SK-N-SH (cell line): ENCODE measurements at regions of chr7 and their contacts with region 1.

Region 1: GRCh38 chr7:35906191-35906908 is 105.5 kb downstream of the SEPTIN7 start:
- DNase-seq: peak; percentile 57
- H3K4me3 ChIP-seq: no peak overlapping the region; a peak in 1 of 4 replicates
- H3K27ac ChIP-seq: peak overlapping the region; percentile 13 to 39; a peak in 3 of 4 replicates
- H3K4me1 ChIP-seq: peaks cover 6 to 24% of the 10 kb centered on the region in 2 experiments; a peak in 2 of 4 replicates
- H3K27me3 ChIP-seq: no peaks in the 10 kb centered on the region
- CTCF ChIP-seq: peak; percentile 99
- EP300 ChIP-seq: no peak; a peak in 1 of 4 replicates
- RAD21 ChIP-seq: peak; percentile 96

Region 2: GRCh38 chr7:35694781-35695472 is 211.4 kb before region 1 on chr7 and contains the start of gene HERPUD2:
- CTCF ChIA-PET with region 1: interaction called, 45 read pairs
- POLR2A ChIA-PET with region 1: no interaction called
- DNase-seq: peak; percentile 99
- H3K4me3 ChIP-seq: peak within 1 kb of the TSS; percentile 92 to 100
- H3K27ac ChIP-seq: peak within 1 kb of the TSS; percentile 87 to 89
- H3K4me1 ChIP-seq: peaks cover 14 to 37% of the 10 kb centered on the region in 2 experiments; a peak in 3 of 4 replicates
- H3K27me3 ChIP-seq: no peaks in the 10 kb centered on the region
- CTCF ChIP-seq: no peak
- EP300 ChIP-seq: no peak
- RAD21 ChIP-seq: no peak
- polyA plus RNA-seq, gene HERPUD2: 39.2 and 48.3 TPM in 2 replicates

Region 3: DNA sequence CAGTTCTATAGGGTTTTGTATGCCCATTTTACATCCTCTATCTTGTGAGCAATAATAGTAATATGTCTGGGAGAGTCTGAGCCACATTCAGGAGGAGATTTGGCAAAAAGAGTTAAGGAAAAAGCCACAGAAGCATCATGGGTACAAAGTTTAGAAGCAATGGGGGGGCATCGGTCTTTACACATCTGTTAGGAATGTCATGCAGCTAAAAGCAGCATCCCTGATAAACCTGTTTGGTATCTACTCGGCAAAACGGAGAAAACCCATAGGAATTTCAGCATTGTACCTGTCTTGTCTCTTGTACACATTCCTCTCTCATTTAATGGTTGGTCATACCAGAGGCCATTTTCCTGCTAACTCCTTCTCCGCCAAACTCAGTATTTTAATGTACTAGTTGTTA is 198.9 kb before region 1 on chr7:
- CTCF ChIA-PET with region 1: interaction called, 77 read pairs
- POLR2A ChIA-PET with region 1: interaction called, 8 read pairs
- DNase-seq: no peak
- H3K4me3 ChIP-seq: no peak overlapping the region
- H3K27ac ChIP-seq: no peak overlapping the region
- H3K4me1 ChIP-seq: peaks cover 2 to 7% of the 10 kb centered on the region in 2 experiments; a peak in 3 of 4 replicates
- H3K27me3 ChIP-seq: no peaks in the 10 kb centered on the region
- CTCF ChIP-seq: no peak
- EP300 ChIP-seq: no peak
- RAD21 ChIP-seq: no peak

Region 4: GRCh38 chr7:35716038-35716803 is 190.1 kb before region 1 on chr7:
- CTCF ChIA-PET with region 1: interaction called, 33 read pairs
- POLR2A ChIA-PET with region 1: no interaction called
- DNase-seq: peak; percentile 58
- H3K4me3 ChIP-seq: peak overlapping the region; percentile 38 to 39
- H3K27ac ChIP-seq: peak overlapping the region; percentile 26 to 90; a peak in 3 of 4 replicates
- H3K4me1 ChIP-seq: peaks cover 7 to 20% of the 10 kb centered on the region in 2 experiments; a peak in 2 of 4 replicates
- H3K27me3 ChIP-seq: no peaks in the 10 kb centered on the region
- CTCF ChIP-seq: no peak
- EP300 ChIP-seq: peak in 1 of 2 experiments; percentile 65; a peak in 3 of 4 replicates
- RAD21 ChIP-seq: peak; percentile 10; the same call in 1 of the 2 replicates

Region 5: DNA sequence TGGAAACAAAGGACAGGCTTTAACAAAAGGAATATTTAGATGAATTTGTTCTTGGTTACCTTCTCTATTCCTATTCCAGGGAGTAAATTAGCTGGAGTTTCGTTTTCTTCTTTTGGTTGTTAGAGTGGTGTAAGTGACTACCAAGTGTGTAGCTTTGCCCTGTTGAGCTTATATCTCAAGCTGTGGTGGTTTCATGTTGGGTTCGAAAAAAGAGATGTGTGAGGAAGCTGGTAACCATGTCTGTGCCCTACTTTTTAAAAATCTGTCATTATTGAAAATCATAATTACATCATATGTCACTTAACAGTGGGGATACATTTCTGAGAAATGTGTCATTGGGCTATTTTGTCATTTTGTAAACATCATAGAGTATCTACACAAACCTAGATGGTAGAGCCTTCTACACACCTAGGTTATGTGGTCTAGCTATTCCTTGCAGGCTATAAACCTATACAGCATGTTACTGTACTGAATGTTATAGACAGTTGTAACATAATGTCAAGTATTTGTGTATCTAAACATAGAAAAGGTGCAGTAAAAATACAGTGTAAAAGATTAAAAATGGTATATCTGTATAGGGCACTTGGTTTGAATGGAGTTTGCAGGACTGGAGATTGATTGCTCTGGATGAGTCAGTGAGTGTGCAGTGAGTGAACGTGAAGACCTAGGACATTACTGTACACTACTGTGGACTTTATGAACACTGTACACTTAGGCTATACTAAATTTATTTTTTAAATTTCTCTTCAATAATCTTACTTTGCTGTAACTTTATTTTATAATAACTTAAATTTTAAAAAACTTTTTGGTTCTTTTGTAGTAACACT is 15.1 kb before region 1 on chr7:
- CTCF ChIA-PET with region 1: interaction called, 21 read pairs
- POLR2A ChIA-PET with region 1: no interaction called
- DNase-seq: no peak
- H3K4me3 ChIP-seq: no peak overlapping the region
- H3K27ac ChIP-seq: no peak overlapping the region
- H3K4me1 ChIP-seq: no peaks in the 10 kb centered on the region; a peak in 1 of 4 replicates
- H3K27me3 ChIP-seq: no peaks in the 10 kb centered on the region
- CTCF ChIP-seq: no peak
- EP300 ChIP-seq: no peak
- RAD21 ChIP-seq: no peak

Region 6: DNA sequence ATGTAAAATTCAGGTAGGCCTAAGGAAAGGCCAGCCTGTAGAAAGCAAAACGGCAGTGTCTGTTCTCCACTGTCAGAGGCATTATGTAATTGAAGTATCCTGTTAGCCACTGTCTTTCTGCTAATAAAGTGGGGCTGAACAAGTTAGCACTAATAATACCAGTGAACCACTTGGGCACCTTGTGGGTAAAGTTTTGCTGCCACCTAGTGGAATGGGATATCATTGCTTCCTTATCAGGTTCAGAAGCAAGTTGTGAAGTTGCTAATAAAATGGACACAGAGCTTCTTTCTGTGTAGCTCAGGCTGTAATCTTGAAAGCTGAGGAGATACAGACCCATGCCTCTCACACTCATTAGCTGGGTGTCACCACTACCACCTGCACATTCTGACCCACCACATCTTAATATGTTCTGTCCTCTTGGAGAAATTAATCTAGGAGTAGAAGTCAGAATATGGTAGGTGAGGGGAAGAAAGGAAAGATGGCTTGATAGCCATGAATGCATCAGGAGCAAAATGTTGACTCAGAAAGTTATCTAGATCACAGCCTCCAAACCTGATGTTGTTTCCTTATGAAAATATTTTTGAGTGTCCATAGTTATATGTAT is 69.6 kb after region 1 on chr7:
- CTCF ChIA-PET with region 1: interaction called, 26 read pairs
- POLR2A ChIA-PET with region 1: no interaction called
- DNase-seq: peak; percentile 72
- H3K4me3 ChIP-seq: no peak overlapping the region
- H3K27ac ChIP-seq: no peak overlapping the region
- H3K4me1 ChIP-seq: peaks cover 0 to 5% of the 10 kb centered on the region in 2 experiments; a peak in 1 of 4 replicates
- H3K27me3 ChIP-seq: no peaks in the 10 kb centered on the region
- CTCF ChIP-seq: peak; percentile 96
- EP300 ChIP-seq: no peak
- RAD21 ChIP-seq: peak; percentile 99